ENCODE measurements at regions of chr20 and their contacts with region 1.

Region 1: GRCh38 chr20:50750145-50750671 is 18.8 kb downstream of the PARD6B start:
- DNase-seq: no peak
- ATAC-seq: no peak
- H3K4me3 ChIP-seq: no peak overlapping the region
- H3K27ac ChIP-seq: no peak overlapping the region
- H3K4me1 ChIP-seq: peaks cover 28 to 31% of the 10 kb centered on the region in 2 experiments
- H3K27me3 ChIP-seq: no peaks in the 10 kb centered on the region
- CTCF ChIP-seq: no peak
- POLR2A ChIP-seq: no peak
- RAD21 ChIP-seq: no peak

Region 2: GRCh38 chr20:50625986-50626677 is 124.1 kb before region 1 on chr20:
- CTCF ChIA-PET with region 1: interaction called, 32 read pairs
- POLR2A ChIA-PET with region 1: no interaction called
- RAD21 ChIA-PET with region 1: interaction called, 4 to 10 read pairs
- intact Hi-C with region 1: loop called (anchors 5 kb)
- DNase-seq: peak; percentile 36
- ATAC-seq: peak; percentile 91
- H3K4me3 ChIP-seq: 0 out of 4 replicates have a peak overlapping the region, but pooled peaks of 1 of the 2 experiments have one; percentile 7
- H3K27ac ChIP-seq: no peak overlapping the region
- H3K4me1 ChIP-seq: peaks cover 6 to 20% of the 10 kb centered on the region in 2 experiments; a peak in 3 of 4 replicates
- H3K27me3 ChIP-seq: no peaks in the 10 kb centered on the region
- CTCF ChIP-seq: peak; percentile 83 to 90 (median 85)
- POLR2A ChIP-seq: no peak
- RAD21 ChIP-seq: peak; percentile 98

Region 3: GRCh38 chr20:50663095-50663850 is 86.9 kb before region 1 on chr20:
- CTCF ChIA-PET with region 1: interaction called, 19 read pairs
- POLR2A ChIA-PET with region 1: interaction called, 7 read pairs
- RAD21 ChIA-PET with region 1: interaction called in 1 of 2 experiments, 3 read pairs
- intact Hi-C with region 1: loop called (anchors 2 kb)
- DNase-seq: peak; percentile 36
- ATAC-seq: peak; percentile 75
- H3K4me3 ChIP-seq: no peak overlapping the region
- H3K27ac ChIP-seq: no peak overlapping the region
- H3K4me1 ChIP-seq: peaks cover 26 to 43% of the 10 kb centered on the region in 2 experiments; a peak in 3 of 4 replicates
- H3K27me3 ChIP-seq: no peaks in the 10 kb centered on the region
- CTCF ChIP-seq: peak; percentile 34 to 62 (median 50); a peak in 4 of 6 replicates
- POLR2A ChIP-seq: no peak
- RAD21 ChIP-seq: peak; percentile 80

Region 4: DNA sequence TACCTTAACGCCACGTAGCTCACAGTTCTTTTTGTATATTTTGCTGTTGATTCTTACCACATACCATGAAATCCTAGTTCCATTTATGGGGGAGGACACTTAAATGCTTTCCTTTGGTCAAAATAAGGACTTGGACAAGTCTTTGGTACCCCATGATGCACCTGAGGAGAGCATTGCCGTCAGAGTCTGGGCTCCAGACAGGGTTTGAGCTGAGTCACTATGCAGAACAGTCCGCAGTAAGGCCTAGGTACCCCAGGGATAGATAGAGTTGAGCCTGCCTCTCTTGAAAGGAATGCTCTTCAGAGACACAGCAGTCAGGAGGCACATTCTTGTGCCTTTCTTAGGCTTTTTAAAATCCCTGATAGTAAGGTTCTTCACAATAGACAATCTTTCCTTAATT is 12.9 kb before region 1 on chr20:
- CTCF ChIA-PET with region 1: interaction called, 22 read pairs
- POLR2A ChIA-PET with region 1: interaction called, 5 read pairs
- RAD21 ChIA-PET with region 1: interaction called in 1 of 2 experiments, 6 read pairs
- intact Hi-C with region 1: no loop called
- DNase-seq: no peak
- ATAC-seq: no peak
- H3K4me3 ChIP-seq: no peak overlapping the region
- H3K27ac ChIP-seq: peak overlapping the region; percentile 21; the same call in 1 of the 2 replicates
- H3K4me1 ChIP-seq: peaks cover 84 to 100% of the 10 kb centered on the region in 2 experiments
- H3K27me3 ChIP-seq: no peaks in the 10 kb centered on the region
- CTCF ChIP-seq: no peak
- POLR2A ChIP-seq: no peak
- RAD21 ChIP-seq: no peak

Region 5: GRCh38 chr20:50762435-50763201 is 12.4 kb after region 1 on chr20:
- CTCF ChIA-PET with region 1: interaction called, 27 read pairs
- POLR2A ChIA-PET with region 1: interaction called, 4 read pairs
- RAD21 ChIA-PET with region 1: no interaction called
- intact Hi-C with region 1: no loop called
- DNase-seq: no peak
- ATAC-seq: peak; percentile 35
- H3K4me3 ChIP-seq: peak overlapping the region in 1 of 2 experiments; percentile 21; a peak in 3 of 4 replicates
- H3K27ac ChIP-seq: peak overlapping the region; percentile 92
- H3K4me1 ChIP-seq: peaks cover 63 to 96% of the 10 kb centered on the region in 2 experiments
- H3K27me3 ChIP-seq: no peaks in the 10 kb centered on the region
- CTCF ChIP-seq: no peak
- POLR2A ChIP-seq: no peak
- RAD21 ChIP-seq: no peak

Region 6: GRCh38 chr20:50824193-50824632 is 74.0 kb after region 1 on chr20:
- CTCF ChIA-PET with region 1: no interaction called
- POLR2A ChIA-PET with region 1: no interaction called
- RAD21 ChIA-PET with region 1: no interaction called
- intact Hi-C with region 1: no loop called
- DNase-seq: no peak
- ATAC-seq: peak; percentile 17; the same call in 1 of the 2 replicates
- H3K4me3 ChIP-seq: no peak overlapping the region
- H3K27ac ChIP-seq: no peak overlapping the region
- H3K4me1 ChIP-seq: peaks cover 4 to 9% of the 10 kb centered on the region in 2 experiments; a peak in 3 of 4 replicates
- H3K27me3 ChIP-seq: no peaks in the 10 kb centered on the region
- CTCF ChIP-seq: no peak
- POLR2A ChIP-seq: no peak
- RAD21 ChIP-seq: no peak